Right ventricle myocardium inferior (tissue), 1 donor: ENCODE measurements at regions of chr19 and their contacts with region 1.

Region 1: DNA sequence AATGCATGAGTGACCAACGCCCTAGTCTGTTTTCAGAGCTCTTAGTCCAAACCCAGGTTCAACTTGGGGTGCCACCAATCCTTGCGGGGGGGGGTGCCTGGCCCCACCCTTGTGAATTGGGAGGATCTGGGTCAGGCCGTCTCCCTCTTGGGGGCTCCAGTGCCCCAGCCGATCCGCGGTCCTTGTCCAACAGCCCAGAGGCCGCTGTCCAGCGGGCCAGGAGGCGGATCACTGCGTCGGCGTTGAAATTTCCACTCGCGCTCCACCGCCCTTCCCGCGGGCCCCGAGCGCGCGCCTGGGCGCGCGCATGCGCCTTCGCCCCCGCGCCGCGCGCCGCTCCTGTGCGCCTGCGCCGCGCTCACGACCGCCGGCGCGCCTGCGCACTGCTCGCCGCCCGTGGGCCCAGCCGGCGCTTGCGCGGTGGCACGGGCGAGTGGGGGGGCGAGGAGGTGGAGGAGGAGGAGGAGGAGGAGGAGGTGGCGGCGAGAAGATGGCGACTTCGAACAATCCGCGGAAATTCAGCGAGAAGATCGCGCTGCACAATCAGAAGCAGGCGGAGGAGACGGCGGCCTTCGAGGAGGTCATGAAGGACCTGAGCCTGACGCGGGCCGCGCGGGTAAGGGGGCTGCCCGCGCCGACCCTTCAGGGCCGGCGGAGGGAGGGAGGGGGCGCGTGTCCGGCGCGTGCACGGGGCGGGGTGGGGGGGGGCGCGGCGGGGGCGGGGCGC is at the start of gene CRTC1:
- DNase-seq: peak; percentile 94
- ATAC-seq: peak; percentile 87
- total RNA-seq, gene CRTC1: 10.3 TPM

Region 2: GRCh38 chr19:18357041-18357440 is 326.3 kb before region 1 on chr19:
- intact Hi-C with region 1: no loop called
- DNase-seq: peak; percentile 31
- ATAC-seq: no peak

Region 3: GRCh38 chr19:18846862-18847548 is 163.6 kb after region 1 on chr19:
- intact Hi-C with region 1: loop called (anchors 5 kb)
- DNase-seq: peak; percentile 90
- ATAC-seq: peak; percentile 77